ENCODE measurements at regions of chr1 and their contacts with region 1.

Region 1: GRCh38 chr1:226547754-226548191 is 791 bp upstream of the STUM start:
- DNase-seq: peak; percentile 78 to 87 (median 80)
- ATAC-seq: peak; percentile 51 to 80 (median 75)
- H3K4me3 ChIP-seq: peak overlapping the region in 6 of 12 donors; percentile 53 to 66 (median 62)
- H3K27ac ChIP-seq: peak overlapping the region in 1 of 12 donors; percentile 87
- H3K4me1 ChIP-seq: peaks cover 0 to 79% (median 29%) of the 10 kb centered on the region in 12 donors
- H3K27me3 ChIP-seq: peaks cover 0 to 27% (median 7%) of the 10 kb centered on the region in 9 donors
- CTCF ChIP-seq: peak; percentile 76 to 94 (median 83)
- POLR2A ChIP-seq: no peak

Region 2: GRCh38 chr1:226596531-226597165 is 48.9 kb after region 1 on chr1:
- intact Hi-C with region 1: loop called in 1 of 10 experiments (anchors 5 kb)
- DNase-seq: no peak
- ATAC-seq: no peak
- H3K4me3 ChIP-seq: no peak overlapping the region
- H3K27ac ChIP-seq: no peak overlapping the region
- H3K4me1 ChIP-seq: no peaks in the 10 kb centered on the region
- H3K27me3 ChIP-seq: no peaks in the 10 kb centered on the region
- CTCF ChIP-seq: no peak
- POLR2A ChIP-seq: no peak

Region 3: DNA sequence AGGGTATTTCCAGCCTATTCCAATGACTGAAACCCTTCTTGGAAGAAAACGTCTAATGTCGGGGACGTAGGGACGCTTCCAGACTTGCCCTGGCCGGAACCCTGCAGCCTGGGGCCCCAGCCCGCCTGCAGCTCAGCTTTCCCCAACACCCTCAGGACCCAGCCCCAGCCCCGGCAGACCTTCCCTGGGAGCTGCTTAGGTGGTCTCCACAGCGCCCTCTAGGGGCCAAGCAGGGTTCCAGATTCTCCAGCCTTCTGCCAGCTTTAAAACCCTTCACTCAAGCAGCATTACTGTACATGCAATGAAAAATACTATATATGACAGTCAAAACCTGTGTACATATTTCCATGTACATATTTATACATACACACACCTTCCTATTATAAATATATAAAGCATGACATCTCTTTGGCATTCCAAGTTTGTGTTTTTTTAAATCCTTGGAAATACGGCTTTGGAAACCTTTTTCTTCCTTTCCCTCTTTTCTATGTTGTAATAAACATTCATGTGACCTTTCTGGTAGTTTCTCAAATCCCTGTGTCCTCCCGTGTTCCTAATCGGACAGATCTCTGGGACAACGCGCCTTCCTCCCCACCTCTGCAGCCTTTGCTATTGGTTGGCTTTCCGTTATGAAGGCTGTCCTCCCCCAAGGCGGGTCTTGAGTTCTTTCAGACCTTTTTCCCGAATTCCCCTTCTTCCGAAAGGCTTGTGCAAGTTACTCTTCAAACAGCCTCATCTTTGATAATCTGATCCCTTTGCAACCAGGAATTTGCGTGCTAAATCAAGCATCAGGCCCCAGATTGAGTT is 61.1 kb after region 1 on chr1:
- intact Hi-C with region 1: loop called (anchors 2 to 5 kb)
- DNase-seq: peak; percentile 51 to 85 (median 66)
- ATAC-seq: peak in 3 of 4 donors; percentile 33 to 59 (median 57)
- H3K4me3 ChIP-seq: no peak overlapping the region
- H3K27ac ChIP-seq: no peak overlapping the region
- H3K4me1 ChIP-seq: peaks cover 0 to 27% (median 17%) of the 10 kb centered on the region in 12 donors
- H3K27me3 ChIP-seq: peaks cover 0 to 2% (median 0%) of the 10 kb centered on the region in 9 donors
- CTCF ChIP-seq: peak; percentile 69 to 89 (median 84)
- POLR2A ChIP-seq: no peak

Region 4: GRCh38 chr1:226827968-226828513 is 280.3 kb after region 1 on chr1:
- intact Hi-C with region 1: loop called in 6 of 10 experiments (anchors 5 to 10 kb)
- DNase-seq: peak; percentile 94 to 98 (median 97)
- ATAC-seq: peak; percentile 96 to 98 (median 97)
- H3K4me3 ChIP-seq: peak overlapping the region in 8 of 12 donors; percentile 18 to 47 (median 33)
- H3K27ac ChIP-seq: peak overlapping the region; percentile 27 to 93 (median 85)
- H3K4me1 ChIP-seq: peaks cover 0 to 20% (median 14%) of the 10 kb centered on the region in 12 donors
- H3K27me3 ChIP-seq: no peaks in the 10 kb centered on the region
- CTCF ChIP-seq: peak; percentile 92 to 98 (median 96)
- POLR2A ChIP-seq: no peak